Activated CD4-positive, alpha-beta T cell treated with anti-CD3 and anti-CD28 coated beads for 36 hours (primary cell): ENCODE measurements at regions of chr4 and their contacts with region 1.

Region 1: DNA sequence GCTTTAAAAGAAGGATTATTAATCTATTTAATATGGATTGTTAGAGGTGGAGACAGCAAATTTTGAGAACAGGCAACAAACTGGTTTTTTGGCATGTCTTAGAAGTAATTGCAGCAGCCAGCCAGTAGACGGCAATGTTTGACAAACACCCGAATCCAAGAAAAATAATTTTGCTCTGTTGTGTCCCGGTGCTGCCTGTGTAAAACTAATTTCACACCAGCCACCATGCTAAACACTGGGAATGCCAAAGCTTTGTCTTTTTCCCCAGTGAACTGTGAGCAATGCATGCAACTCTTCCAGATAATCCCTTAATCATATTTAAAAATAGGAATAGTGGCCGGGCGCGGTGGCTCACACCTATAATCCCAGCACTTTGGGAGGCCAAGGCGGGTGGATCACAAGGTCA is 25.9 kb downstream of the SMIM31 start:
- DNase-seq: peak; percentile 42
- ATAC-seq: no peak
- H3K4me3 Mint-ChIP-seq: no peak overlapping the region
- H3K27ac Mint-ChIP-seq: no peak overlapping the region
- H3K4me1 Mint-ChIP-seq: no peaks in the 10 kb centered on the region
- H3K27me3 Mint-ChIP-seq: no peaks in the 10 kb centered on the region

Region 2: GRCh38 chr4:164807611-164808010 is 27.8 kb after region 1 on chr4:
- CTCF ChIA-PET with region 1: no interaction called
- POLR2A ChIA-PET with region 1: no interaction called
- intact Hi-C with region 1: no loop called
- DNase-seq: no peak
- ATAC-seq: no peak
- H3K4me3 Mint-ChIP-seq: no peak overlapping the region
- H3K27ac Mint-ChIP-seq: no peak overlapping the region
- H3K4me1 Mint-ChIP-seq: no peaks in the 10 kb centered on the region
- H3K27me3 Mint-ChIP-seq: peaks cover 3% of the 10 kb centered on the region

Region 3: GRCh38 chr4:164997324-164997723 is 217.5 kb after region 1 on chr4:
- CTCF ChIA-PET with region 1: no interaction called
- POLR2A ChIA-PET with region 1: no interaction called
- intact Hi-C with region 1: loop called in 1 of 2 experiments (anchors 5 kb)
- DNase-seq: no peak
- ATAC-seq: no peak
- H3K4me3 Mint-ChIP-seq: no peak overlapping the region
- H3K27ac Mint-ChIP-seq: no peak overlapping the region
- H3K4me1 Mint-ChIP-seq: no peaks in the 10 kb centered on the region
- H3K27me3 Mint-ChIP-seq: peaks cover 10% of the 10 kb centered on the region

Region 4: DNA sequence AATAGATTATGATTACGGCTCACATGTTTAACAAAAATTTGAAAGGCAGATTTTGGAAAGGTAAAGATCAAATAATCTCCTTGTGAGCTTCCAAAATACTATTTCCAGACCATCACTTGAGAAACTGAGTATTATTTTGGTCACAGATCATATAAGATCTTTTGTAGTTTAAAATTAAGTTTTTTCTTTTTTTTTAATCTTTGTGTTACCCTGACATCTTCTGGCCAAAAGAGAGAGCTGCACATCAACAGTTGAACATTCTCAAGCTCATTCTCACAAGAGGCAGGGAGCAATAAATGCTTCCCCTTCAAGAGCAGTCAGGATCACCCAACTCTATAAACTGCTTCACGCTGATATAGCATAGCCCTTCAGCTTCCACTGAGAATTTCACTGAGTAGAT is 317.0 kb after region 1 on chr4:
- CTCF ChIA-PET with region 1: interaction called, 5 read pairs
- POLR2A ChIA-PET with region 1: no interaction called
- intact Hi-C with region 1: loop called (anchors 2 to 5 kb)
- DNase-seq: no peak
- ATAC-seq: peak; percentile 16
- H3K4me3 Mint-ChIP-seq: no peak overlapping the region
- H3K27ac Mint-ChIP-seq: no peak overlapping the region
- H3K4me1 Mint-ChIP-seq: no peaks in the 10 kb centered on the region
- H3K27me3 Mint-ChIP-seq: no peaks in the 10 kb centered on the region